Breast epithelium (tissue), 4 donors: ENCODE measurements at regions of chr19 and their contacts with region 1.

Region 1: GRCh38 chr19:29714953-29715700 is at the start of gene C19orf12:
- DNase-seq: peak in 1 of 2 donors; percentile 64
- H3K4me3 ChIP-seq: peak within 1 kb of the TSS; percentile 94 to 95 (median 95)
- H3K27ac ChIP-seq: peak within 1 kb of the TSS; percentile 95 to 98
- H3K4me1 ChIP-seq: peaks cover 0 to 14% of the 10 kb centered on the region in 2 donors
- H3K27me3 ChIP-seq: no peaks in the 10 kb centered on the region
- CTCF ChIP-seq: no peak
- POLR2A ChIP-seq: peak; percentile 36
- total RNA-seq, gene C19orf12: 42.7 to 230 (median 53.7) TPM

Region 2: DNA sequence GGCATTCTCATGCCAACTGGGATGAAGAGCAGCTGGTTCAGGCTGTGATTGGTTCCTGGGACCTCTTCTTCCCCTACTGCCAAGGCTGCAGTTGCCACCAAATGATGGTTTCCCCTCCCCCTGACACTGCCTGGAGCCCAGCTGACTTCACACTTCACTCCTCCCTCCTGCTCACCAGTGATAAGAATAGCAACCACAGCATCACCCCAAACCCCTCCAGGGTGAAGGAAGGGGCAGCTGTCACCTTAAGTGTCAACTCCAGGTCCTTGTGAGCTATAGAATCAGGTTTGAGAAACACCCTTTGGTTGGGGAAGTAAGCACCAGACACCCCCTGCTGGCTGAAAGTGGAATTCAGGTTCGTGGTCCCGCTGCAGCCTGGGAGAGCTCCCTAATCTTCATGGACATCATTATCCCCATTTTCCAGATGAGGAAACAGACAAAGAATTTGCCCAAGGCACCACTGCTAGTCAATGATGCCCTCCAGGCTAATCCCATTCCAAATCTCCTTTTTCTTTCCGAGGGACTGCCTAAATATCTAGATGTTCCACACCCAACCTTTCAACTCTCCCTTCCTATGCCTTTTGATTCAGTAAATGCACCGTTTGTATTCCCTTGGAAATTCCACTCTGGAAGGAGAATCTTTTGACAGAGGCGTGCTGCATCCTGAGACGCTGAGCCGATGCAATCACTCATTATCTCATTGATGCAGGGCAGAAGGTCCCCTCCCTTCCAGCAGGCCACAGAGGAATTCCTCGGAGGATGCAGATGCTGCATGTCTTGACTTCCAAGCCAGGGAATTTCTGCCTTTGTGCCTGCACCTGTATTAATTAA is 451.6 kb before region 1 on chr19:
- intact Hi-C with region 1: no loop called
- DNase-seq: no peak
- H3K4me3 ChIP-seq: no peak overlapping the region
- H3K27ac ChIP-seq: no peak overlapping the region
- H3K4me1 ChIP-seq: no peaks in the 10 kb centered on the region
- H3K27me3 ChIP-seq: peaks cover 2 to 23% of the 10 kb centered on the region in 2 donors
- CTCF ChIP-seq: peak in 2 of 3 donors; percentile 40 to 61
- POLR2A ChIP-seq: no peak

Region 3: GRCh38 chr19:29610563-29611271 is 104.4 kb before region 1 on chr19:
- intact Hi-C with region 1: loop called (anchors 5 kb)
- DNase-seq: peak; percentile 76 to 80
- H3K4me3 ChIP-seq: no peak overlapping the region
- H3K27ac ChIP-seq: no peak overlapping the region
- H3K4me1 ChIP-seq: no peaks in the 10 kb centered on the region
- H3K27me3 ChIP-seq: no peaks in the 10 kb centered on the region
- CTCF ChIP-seq: peak; percentile 44 to 85 (median 79)
- POLR2A ChIP-seq: no peak

Region 4: GRCh38 chr19:29761575-29762232 is 46.6 kb after region 1 on chr19:
- intact Hi-C with region 1: loop called (anchors 2 kb)
- DNase-seq: no peak
- H3K4me3 ChIP-seq: no peak overlapping the region
- H3K27ac ChIP-seq: no peak overlapping the region
- H3K4me1 ChIP-seq: no peaks in the 10 kb centered on the region
- H3K27me3 ChIP-seq: peaks cover 0 to 10% of the 10 kb centered on the region in 2 donors
- CTCF ChIP-seq: no peak
- POLR2A ChIP-seq: no peak

Region 5: DNA sequence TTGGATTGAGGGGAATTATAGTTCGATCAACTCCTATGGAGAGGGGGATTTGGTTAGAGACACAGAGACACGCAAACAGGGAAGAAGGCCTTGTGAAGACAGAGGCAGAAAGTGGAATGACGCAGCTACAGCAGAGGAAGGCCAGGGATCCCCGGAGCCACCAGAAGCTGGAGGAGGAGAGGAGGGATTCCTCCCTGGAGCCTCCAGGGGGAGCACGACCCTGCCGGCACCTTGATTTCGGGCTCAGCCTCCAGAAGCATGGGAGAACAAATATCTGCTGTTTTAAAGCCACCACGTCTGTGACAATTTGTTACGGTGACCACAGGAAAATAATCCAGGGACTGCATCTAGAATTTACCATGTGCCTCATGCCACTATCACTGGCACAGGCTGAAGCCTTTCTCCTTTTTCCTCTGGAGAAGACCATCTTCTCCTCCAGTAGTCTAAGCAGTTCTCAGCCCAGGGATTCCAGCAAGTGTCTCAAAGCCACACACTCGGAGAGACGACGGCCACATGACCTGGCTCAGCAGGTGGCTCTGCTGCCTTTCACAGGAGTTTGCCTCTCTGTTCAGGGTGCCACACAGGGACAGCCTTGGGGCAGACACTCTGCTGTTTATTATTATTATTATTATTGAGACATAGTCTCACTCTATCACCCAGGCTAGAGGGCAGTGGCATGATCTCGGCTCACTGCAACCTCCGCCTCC is 56.7 kb after region 1 on chr19:
- intact Hi-C with region 1: no loop called
- DNase-seq: no peak
- H3K4me3 ChIP-seq: no peak overlapping the region
- H3K27ac ChIP-seq: no peak overlapping the region
- H3K4me1 ChIP-seq: no peaks in the 10 kb centered on the region
- H3K27me3 ChIP-seq: peaks cover 0 to 3% of the 10 kb centered on the region in 2 donors
- CTCF ChIP-seq: peak in 2 of 3 donors; percentile 42 to 52
- POLR2A ChIP-seq: no peak

Region 6: GRCh38 chr19:29785955-29786589 is 70.9 kb after region 1 on chr19:
- intact Hi-C with region 1: no loop called
- DNase-seq: no peak
- H3K4me3 ChIP-seq: no peak overlapping the region
- H3K27ac ChIP-seq: no peak overlapping the region
- H3K4me1 ChIP-seq: no peaks in the 10 kb centered on the region
- H3K27me3 ChIP-seq: no peaks in the 10 kb centered on the region
- CTCF ChIP-seq: no peak
- POLR2A ChIP-seq: no peak